ENCODE measurements at regions of chr14 and their contacts with region 1.

Region 1: GRCh38 chr14:99271951-99272631 is at the start of gene BCL11B:
- DNase-seq: peak; percentile 78 to 96 (median 88)
- ATAC-seq: peak; percentile 76
- H3K4me3 ChIP-seq: peak within 1 kb of the TSS; percentile 97
- H3K4me3 Mint-ChIP-seq: peak within 1 kb of the TSS; percentile 100
- H3K27ac ChIP-seq: peak within 1 kb of the TSS; percentile 18 to 79
- H3K27ac Mint-ChIP-seq: peak within 1 kb of the TSS; percentile 99
- H3K4me1 ChIP-seq: peaks cover 36% of the 10 kb centered on the region
- H3K4me1 Mint-ChIP-seq: peaks cover 48% of the 10 kb centered on the region
- H3K27me3 ChIP-seq: no peaks in the 10 kb centered on the region
- H3K27me3 Mint-ChIP-seq: peaks cover 5% of the 10 kb centered on the region
- CTCF ChIP-seq: peak; percentile 71
- total RNA-seq, gene BCL11B: 244 to 254 TPM

Region 2: GRCh38 chr14:97299661-97300060 is 1972.4 kb before region 1 on chr14:
- CTCF ChIA-PET with region 1: no interaction called
- POLR2A ChIA-PET with region 1: no interaction called
- intact Hi-C with region 1: loop called in 1 of 2 experiments (anchors 5 kb)
- DNase-seq: peak in 10 of 14 experiments; percentile 7 to 67 (median 22)
- ATAC-seq: no peak
- H3K4me3 ChIP-seq: no peak overlapping the region
- H3K4me3 Mint-ChIP-seq: no peak overlapping the region
- H3K27ac ChIP-seq: no peak overlapping the region
- H3K27ac Mint-ChIP-seq: no peak overlapping the region
- H3K4me1 ChIP-seq: peaks cover 2% of the 10 kb centered on the region
- H3K4me1 Mint-ChIP-seq: peaks cover 16% of the 10 kb centered on the region
- H3K27me3 ChIP-seq: no peaks in the 10 kb centered on the region
- H3K27me3 Mint-ChIP-seq: no peaks in the 10 kb centered on the region
- CTCF ChIP-seq: peak; percentile 63

Region 3: GRCh38 chr14:97458661-97459579 is 1813.2 kb before region 1 on chr14:
- CTCF ChIA-PET with region 1: no interaction called
- POLR2A ChIA-PET with region 1: no interaction called
- intact Hi-C with region 1: loop called in 1 of 2 experiments (anchors 5 kb)
- DNase-seq: peak; percentile 70 to 94 (median 80)
- ATAC-seq: peak; percentile 86
- H3K4me3 ChIP-seq: peak overlapping the region; percentile 61
- H3K4me3 Mint-ChIP-seq: peak overlapping the region; percentile 92
- H3K27ac ChIP-seq: peak overlapping the region; percentile 76 to 89
- H3K27ac Mint-ChIP-seq: peak overlapping the region; percentile 98
- H3K4me1 ChIP-seq: peaks cover 42% of the 10 kb centered on the region
- H3K4me1 Mint-ChIP-seq: peaks cover 65% of the 10 kb centered on the region
- H3K27me3 ChIP-seq: no peaks in the 10 kb centered on the region
- H3K27me3 Mint-ChIP-seq: no peaks in the 10 kb centered on the region
- CTCF ChIP-seq: no peak

Region 4: DNA sequence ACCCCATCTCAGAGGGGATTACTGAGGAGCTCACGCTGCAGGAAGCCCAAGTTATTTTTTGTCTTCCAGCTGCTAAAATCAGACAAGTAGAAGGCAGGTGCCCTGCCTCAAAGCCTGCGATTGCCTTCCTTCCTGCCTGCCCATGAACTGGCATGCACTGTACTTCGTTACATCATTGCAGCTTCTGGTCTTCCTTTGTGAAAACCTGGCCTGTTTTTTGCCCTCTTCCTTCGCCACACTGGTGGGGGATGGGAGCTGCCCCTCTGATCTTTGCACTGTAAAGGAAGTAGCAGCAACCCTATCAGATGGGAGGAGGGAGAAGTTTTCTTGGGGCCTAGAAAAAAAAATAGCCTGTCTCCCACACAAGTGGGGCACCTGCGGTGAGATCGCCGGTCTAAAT is 1098.8 kb before region 1 on chr14:
- CTCF ChIA-PET with region 1: interaction called, 8 read pairs
- POLR2A ChIA-PET with region 1: interaction called, 40 read pairs
- intact Hi-C with region 1: no loop called
- DNase-seq: peak; percentile 34 to 94 (median 74)
- ATAC-seq: peak; percentile 70
- H3K4me3 ChIP-seq: peak overlapping the region; percentile 33
- H3K4me3 Mint-ChIP-seq: peak overlapping the region; percentile 83
- H3K27ac ChIP-seq: peak overlapping the region; percentile 78 to 80
- H3K27ac Mint-ChIP-seq: peak overlapping the region; percentile 93
- H3K4me1 ChIP-seq: peaks cover 92% of the 10 kb centered on the region
- H3K4me1 Mint-ChIP-seq: peaks cover 100% of the 10 kb centered on the region
- H3K27me3 ChIP-seq: no peaks in the 10 kb centered on the region
- H3K27me3 Mint-ChIP-seq: no peaks in the 10 kb centered on the region
- CTCF ChIP-seq: no peak

Region 5: DNA sequence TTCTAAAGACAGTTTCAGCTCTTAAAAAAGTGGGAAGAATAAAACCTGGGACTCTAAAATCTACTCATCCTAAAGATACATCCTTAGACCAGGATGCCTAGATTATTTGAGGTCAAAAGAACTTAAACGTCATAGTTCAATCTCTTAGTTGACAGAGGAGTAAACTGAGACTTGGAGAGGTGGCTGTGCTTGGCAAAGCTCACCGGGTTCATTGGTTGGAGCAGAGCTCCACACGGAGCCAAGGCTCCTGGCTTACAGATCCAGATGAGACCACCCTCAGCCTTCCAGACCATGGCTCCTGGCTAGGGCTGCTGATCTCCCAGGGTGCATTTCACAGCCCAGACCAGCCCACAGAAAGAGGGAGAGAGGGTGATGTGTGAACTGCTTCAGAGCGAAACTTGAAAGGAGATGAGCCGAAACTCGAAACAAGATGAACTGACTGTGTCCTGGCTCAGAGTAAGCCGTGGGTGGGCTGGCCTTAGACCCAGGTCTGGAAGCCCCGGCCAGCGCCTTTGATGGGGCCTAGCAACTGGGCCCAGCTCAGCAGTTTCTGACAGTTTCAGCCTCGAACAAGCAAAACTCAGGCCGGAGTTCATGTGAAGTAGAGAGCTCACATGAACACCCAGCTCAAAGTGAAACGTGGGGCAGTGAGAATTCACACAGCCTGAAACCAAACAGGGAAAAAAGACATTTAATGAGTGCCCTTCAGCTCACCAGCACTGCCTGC is 1044.9 kb before region 1 on chr14:
- CTCF ChIA-PET with region 1: interaction called, 4 read pairs
- POLR2A ChIA-PET with region 1: interaction called, 8 read pairs
- intact Hi-C with region 1: loop called (anchors 5 to 10 kb)
- DNase-seq: peak in 5 of 14 experiments; percentile 13 to 56 (median 48)
- ATAC-seq: no peak
- H3K4me3 ChIP-seq: no peak overlapping the region
- H3K4me3 Mint-ChIP-seq: peak overlapping the region; percentile 61
- H3K27ac ChIP-seq: peak overlapping the region; percentile 65
- H3K27ac Mint-ChIP-seq: peak overlapping the region; percentile 96
- H3K4me1 ChIP-seq: peaks cover 84% of the 10 kb centered on the region
- H3K4me1 Mint-ChIP-seq: peaks cover 94% of the 10 kb centered on the region
- H3K27me3 ChIP-seq: no peaks in the 10 kb centered on the region
- H3K27me3 Mint-ChIP-seq: no peaks in the 10 kb centered on the region
- CTCF ChIP-seq: no peak

Region 6: GRCh38 chr14:98919434-98919833 is 352.7 kb before region 1 on chr14:
- CTCF ChIA-PET with region 1: no interaction called
- POLR2A ChIA-PET with region 1: no interaction called
- intact Hi-C with region 1: no loop called
- DNase-seq: peak in 1 of 14 experiments; percentile 10
- ATAC-seq: no peak
- H3K4me3 ChIP-seq: no peak overlapping the region
- H3K4me3 Mint-ChIP-seq: no peak overlapping the region
- H3K27ac ChIP-seq: no peak overlapping the region
- H3K27ac Mint-ChIP-seq: no peak overlapping the region
- H3K4me1 ChIP-seq: peaks cover 11% of the 10 kb centered on the region
- H3K4me1 Mint-ChIP-seq: peaks cover 25% of the 10 kb centered on the region
- H3K27me3 ChIP-seq: no peaks in the 10 kb centered on the region
- H3K27me3 Mint-ChIP-seq: no peaks in the 10 kb centered on the region
- CTCF ChIP-seq: no peak

Region 7: DNA sequence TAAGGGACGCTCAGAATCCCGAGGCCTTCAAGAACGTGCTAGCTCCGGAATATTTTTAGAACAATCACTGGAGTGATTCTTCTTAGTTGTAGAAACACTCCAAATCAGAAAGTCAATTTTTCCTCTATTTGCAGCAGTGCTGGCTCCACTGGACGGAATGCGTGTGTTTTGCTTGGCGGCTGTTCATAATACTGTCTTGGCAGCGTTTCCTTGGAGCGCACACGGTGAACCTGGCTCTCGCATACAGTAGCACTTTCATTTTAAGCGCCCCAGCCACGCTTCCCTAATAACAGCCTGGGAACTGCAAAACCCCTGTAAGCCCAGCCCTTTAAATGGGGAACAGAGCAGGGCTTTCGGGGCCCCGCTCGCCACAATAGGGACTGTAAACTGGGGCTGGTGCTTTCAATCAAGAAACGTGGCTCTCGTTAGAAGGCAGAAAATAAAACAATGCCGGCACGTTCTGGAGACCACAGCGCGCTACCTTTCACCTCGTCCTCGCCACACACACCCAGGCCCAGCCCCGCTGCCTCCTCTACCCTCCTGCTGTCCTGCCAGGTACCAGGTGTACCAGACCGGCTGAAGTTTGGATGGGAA is 80.0 kb before region 1 on chr14:
- CTCF ChIA-PET with region 1: interaction called, 49 read pairs
- POLR2A ChIA-PET with region 1: interaction called, 4,389 read pairs
- intact Hi-C with region 1: loop called (anchors 2 kb)
- DNase-seq: peak in 5 of 14 experiments; percentile 40 to 72 (median 64)
- ATAC-seq: peak; percentile 40
- H3K4me3 ChIP-seq: peak overlapping the region; percentile 59
- H3K4me3 Mint-ChIP-seq: peak overlapping the region; percentile 89
- H3K27ac ChIP-seq: peak overlapping the region; percentile 77 to 81
- H3K27ac Mint-ChIP-seq: peak overlapping the region; percentile 95
- H3K4me1 ChIP-seq: peaks cover 99% of the 10 kb centered on the region
- H3K4me1 Mint-ChIP-seq: peaks cover 97% of the 10 kb centered on the region
- H3K27me3 ChIP-seq: no peaks in the 10 kb centered on the region
- H3K27me3 Mint-ChIP-seq: no peaks in the 10 kb centered on the region
- CTCF ChIP-seq: no peak

Region 8: DNA sequence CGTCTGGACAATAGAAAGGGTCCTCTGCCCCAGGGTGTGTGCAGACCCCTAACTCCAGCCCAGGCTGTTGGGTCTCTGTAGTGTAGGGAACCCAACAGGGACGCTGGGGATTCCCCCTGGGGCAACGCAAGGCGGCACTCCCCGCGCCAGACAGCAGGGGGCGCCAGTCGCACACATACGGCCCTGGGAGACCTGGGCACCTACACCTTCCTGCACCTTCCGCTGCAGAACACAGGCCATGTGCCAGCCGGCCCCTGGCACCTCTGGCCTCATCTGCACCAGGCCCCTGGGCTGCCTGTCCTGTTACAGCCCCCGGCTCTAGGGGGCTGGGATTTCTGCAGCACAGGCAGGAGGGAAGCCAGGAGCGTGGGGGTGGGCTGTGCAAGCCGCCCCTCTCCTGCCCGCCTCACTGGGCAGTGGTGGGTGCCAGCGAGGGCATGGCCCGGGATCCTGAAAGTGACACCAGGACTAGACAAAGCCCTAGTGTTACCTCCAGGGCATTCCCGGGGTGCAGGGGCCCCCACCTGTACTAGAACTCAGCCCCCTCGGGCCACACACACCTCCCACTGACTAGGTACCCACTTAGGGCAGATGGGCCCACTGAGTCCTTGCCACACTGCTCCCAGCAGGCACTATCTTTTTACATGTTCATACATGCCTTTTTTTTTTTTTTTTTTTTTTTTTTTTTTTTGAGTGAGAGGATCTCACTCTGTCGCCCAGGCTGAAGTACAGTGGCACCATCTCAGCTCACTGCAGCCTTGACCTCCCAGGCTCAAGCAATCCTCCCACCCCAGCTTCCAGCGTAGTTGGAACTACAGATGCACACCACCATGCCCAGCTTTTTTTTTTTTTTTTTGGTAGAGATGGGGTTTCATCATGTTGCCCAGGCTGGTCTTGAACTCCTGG is 246.6 kb after region 1 on chr14:
- CTCF ChIA-PET with region 1: no interaction called
- POLR2A ChIA-PET with region 1: no interaction called
- intact Hi-C with region 1: no loop called
- DNase-seq: peak; percentile 72 to 90 (median 80)
- ATAC-seq: peak; percentile 92
- H3K4me3 ChIP-seq: no peak overlapping the region
- H3K4me3 Mint-ChIP-seq: no peak overlapping the region
- H3K27ac ChIP-seq: no peak overlapping the region
- H3K27ac Mint-ChIP-seq: no peak overlapping the region
- H3K4me1 ChIP-seq: peaks cover 8% of the 10 kb centered on the region
- H3K4me1 Mint-ChIP-seq: no peaks in the 10 kb centered on the region
- H3K27me3 ChIP-seq: no peaks in the 10 kb centered on the region
- H3K27me3 Mint-ChIP-seq: no peaks in the 10 kb centered on the region
- CTCF ChIP-seq: peak; percentile 97

Region 9: DNA sequence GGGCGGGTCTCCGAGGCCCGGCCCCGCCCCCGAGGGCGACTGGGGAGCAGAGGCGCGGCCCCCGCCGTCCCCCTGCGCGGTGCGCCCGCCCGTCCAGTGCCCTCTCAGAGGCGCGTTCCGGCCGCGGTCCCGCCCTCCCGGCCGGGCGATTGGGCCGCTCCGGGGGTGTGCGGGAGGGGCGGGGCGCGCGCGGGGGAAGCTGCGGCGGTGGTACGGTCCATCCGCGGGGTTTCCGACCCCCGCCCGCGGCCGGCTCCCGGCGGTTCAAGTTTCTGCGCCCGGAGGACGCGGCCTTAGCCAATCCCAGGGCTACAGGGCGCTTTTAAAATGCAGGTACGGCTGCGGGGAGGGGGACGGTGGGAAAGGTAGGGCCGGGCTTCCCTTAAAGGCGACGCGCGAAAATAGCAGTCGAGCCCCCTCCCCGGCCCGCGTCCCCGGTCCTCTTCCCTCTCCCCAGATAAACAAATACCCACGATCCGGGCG is 332.2 kb after region 1 on chr14:
- CTCF ChIA-PET with region 1: no interaction called
- POLR2A ChIA-PET with region 1: no interaction called
- intact Hi-C with region 1: no loop called
- DNase-seq: peak; percentile 89 to 98 (median 96)
- ATAC-seq: peak; percentile 91
- H3K4me3 ChIP-seq: peak overlapping the region; percentile 88
- H3K4me3 Mint-ChIP-seq: peak overlapping the region; percentile 88
- H3K27ac ChIP-seq: peak overlapping the region; percentile 66 to 77
- H3K27ac Mint-ChIP-seq: peak overlapping the region; percentile 85
- H3K4me1 ChIP-seq: peaks cover 50% of the 10 kb centered on the region
- H3K4me1 Mint-ChIP-seq: peaks cover 47% of the 10 kb centered on the region
- H3K27me3 ChIP-seq: no peaks in the 10 kb centered on the region
- H3K27me3 Mint-ChIP-seq: no peaks in the 10 kb centered on the region
- CTCF ChIP-seq: no peak